Caco-2 (cell line): ENCODE measurements at regions of chr3 and their contacts with region 1.

Region 1: GRCh38 chr3:172836390-172836997 is 86.0 kb downstream of the ECT2 start:
- DNase-seq: peak in 1 of 2 experiments; percentile 54
- H3K4me3 ChIP-seq: no peak overlapping the region
- H3K4me3 Mint-ChIP-seq: no peak overlapping the region
- H3K27ac Mint-ChIP-seq: no peak overlapping the region
- H3K4me1 ChIP-seq: no peaks in the 10 kb centered on the region
- H3K4me1 Mint-ChIP-seq: no peaks in the 10 kb centered on the region
- H3K27me3 ChIP-seq: no peaks in the 10 kb centered on the region
- H3K27me3 Mint-ChIP-seq: peaks cover 11% of the 10 kb centered on the region
- CTCF ChIP-seq: peak; percentile 57 to 70

Region 2: GRCh38 chr3:171494457-171495109 is 1341.9 kb before region 1 on chr3:
- CTCF ChIA-PET with region 1: no interaction called
- POLR2A ChIA-PET with region 1: no interaction called
- intact Hi-C with region 1: no loop called
- DNase-seq: no peak
- H3K4me3 ChIP-seq: no peak overlapping the region
- H3K4me3 Mint-ChIP-seq: no peak overlapping the region
- H3K27ac Mint-ChIP-seq: no peak overlapping the region
- H3K4me1 ChIP-seq: no peaks in the 10 kb centered on the region
- H3K4me1 Mint-ChIP-seq: no peaks in the 10 kb centered on the region
- H3K27me3 ChIP-seq: no peaks in the 10 kb centered on the region
- H3K27me3 Mint-ChIP-seq: no peaks in the 10 kb centered on the region
- CTCF ChIP-seq: no peak

Region 3: GRCh38 chr3:171901615-171902312 is 934.7 kb before region 1 on chr3:
- CTCF ChIA-PET with region 1: no interaction called
- POLR2A ChIA-PET with region 1: no interaction called
- intact Hi-C with region 1: no loop called
- DNase-seq: peak in 1 of 2 experiments; percentile 17
- H3K4me3 ChIP-seq: no peak overlapping the region
- H3K4me3 Mint-ChIP-seq: no peak overlapping the region
- H3K27ac Mint-ChIP-seq: no peak overlapping the region
- H3K4me1 ChIP-seq: peaks cover 9% of the 10 kb centered on the region
- H3K4me1 Mint-ChIP-seq: peaks cover 32% of the 10 kb centered on the region
- H3K27me3 ChIP-seq: no peaks in the 10 kb centered on the region
- H3K27me3 Mint-ChIP-seq: no peaks in the 10 kb centered on the region
- CTCF ChIP-seq: no peak

Region 4: GRCh38 chr3:172562871-172563863 is 273.3 kb before region 1 on chr3:
- CTCF ChIA-PET with region 1: no interaction called
- POLR2A ChIA-PET with region 1: no interaction called
- intact Hi-C with region 1: no loop called
- DNase-seq: no peak
- H3K4me3 ChIP-seq: no peak overlapping the region
- H3K4me3 Mint-ChIP-seq: no peak overlapping the region
- H3K27ac Mint-ChIP-seq: no peak overlapping the region
- H3K4me1 ChIP-seq: 0 out of 2 replicates have a peak, but pooled peaks cover 5% of the 10 kb centered on the region
- H3K4me1 Mint-ChIP-seq: peaks cover 7% of the 10 kb centered on the region
- H3K27me3 ChIP-seq: no peaks in the 10 kb centered on the region
- H3K27me3 Mint-ChIP-seq: no peaks in the 10 kb centered on the region
- CTCF ChIP-seq: no peak

Region 5: GRCh38 chr3:172918165-172918564 is 81.7 kb after region 1 on chr3:
- CTCF ChIA-PET with region 1: no interaction called
- POLR2A ChIA-PET with region 1: no interaction called
- intact Hi-C with region 1: loop called (anchors 5 kb)
- DNase-seq: no peak
- H3K4me3 ChIP-seq: no peak overlapping the region
- H3K4me3 Mint-ChIP-seq: no peak overlapping the region
- H3K27ac Mint-ChIP-seq: no peak overlapping the region
- H3K4me1 ChIP-seq: peaks cover 13% of the 10 kb centered on the region
- H3K4me1 Mint-ChIP-seq: peaks cover 11% of the 10 kb centered on the region
- H3K27me3 ChIP-seq: no peaks in the 10 kb centered on the region
- H3K27me3 Mint-ChIP-seq: no peaks in the 10 kb centered on the region
- CTCF ChIP-seq: no peak

Region 6: DNA sequence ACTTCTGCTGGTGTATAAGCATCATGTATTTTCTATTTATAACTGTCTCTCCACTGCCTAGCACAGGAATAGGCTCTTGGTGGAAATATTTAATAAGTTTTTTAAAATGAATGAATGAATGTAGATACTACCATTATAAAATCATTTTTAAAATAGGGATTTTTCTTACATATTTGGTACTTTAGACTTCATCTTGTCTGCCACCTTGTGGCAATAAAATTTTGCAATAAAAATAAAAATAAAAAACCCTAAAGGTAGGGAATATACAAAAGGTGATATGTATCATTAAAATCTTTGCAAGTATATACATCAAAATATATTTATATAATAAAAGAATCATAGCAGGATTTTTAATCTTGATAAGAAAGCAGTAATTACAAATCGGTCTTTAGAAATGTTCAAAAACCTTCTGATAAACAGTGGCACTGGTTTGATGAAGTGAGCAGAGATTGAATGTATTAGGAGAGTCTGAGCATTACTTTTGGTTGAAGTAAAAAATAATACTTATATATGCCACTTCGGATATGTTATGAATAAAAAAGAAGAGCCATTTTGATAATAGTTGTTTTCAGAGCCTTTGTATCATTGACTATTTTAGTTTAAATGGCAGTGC is 209.4 kb after region 1 on chr3:
- CTCF ChIA-PET with region 1: no interaction called
- POLR2A ChIA-PET with region 1: no interaction called
- intact Hi-C with region 1: loop called (anchors 5 kb)
- DNase-seq: no peak
- H3K4me3 ChIP-seq: no peak overlapping the region
- H3K4me3 Mint-ChIP-seq: no peak overlapping the region
- H3K27ac Mint-ChIP-seq: no peak overlapping the region
- H3K4me1 ChIP-seq: no peaks in the 10 kb centered on the region
- H3K4me1 Mint-ChIP-seq: no peaks in the 10 kb centered on the region
- H3K27me3 ChIP-seq: no peaks in the 10 kb centered on the region
- H3K27me3 Mint-ChIP-seq: peaks cover 9% of the 10 kb centered on the region
- CTCF ChIP-seq: peak; percentile 9 to 12